ENCODE measurements at regions of chr1 and their contacts with region 1.

Region 1: GRCh38 chr1:66764994-66765578 is 12.8 kb downstream of the DYNLT5 start:
- DNase-seq: no peak

Region 2: DNA sequence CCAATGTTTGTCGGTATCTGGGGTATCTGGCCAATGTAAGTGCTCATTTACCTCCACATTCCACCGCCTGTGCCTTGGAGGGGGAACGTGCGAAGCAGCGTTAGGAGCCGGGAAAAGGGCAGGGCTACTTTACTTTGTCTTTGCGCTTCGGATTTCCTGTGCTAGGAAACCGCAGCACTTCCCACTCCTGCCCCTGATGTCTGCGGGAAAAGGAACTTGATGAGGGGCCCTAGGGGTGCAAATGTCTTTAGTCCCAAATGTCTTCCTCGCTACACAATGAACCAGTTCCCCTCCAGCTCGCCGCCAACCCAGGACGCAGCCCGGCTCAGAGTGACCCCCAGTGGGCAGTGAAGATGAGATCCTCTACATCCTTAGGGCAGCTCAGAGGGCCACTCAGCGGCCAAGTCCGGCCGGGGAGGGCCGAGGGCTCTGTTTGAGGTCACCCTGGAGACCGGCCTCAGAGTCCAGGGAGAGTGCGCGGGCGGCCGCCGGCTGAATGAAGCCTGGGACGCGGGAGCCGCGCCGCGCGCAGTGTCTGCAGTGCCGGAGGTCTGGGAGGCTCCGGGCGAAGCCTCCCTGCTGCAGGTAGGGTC is 13.0 kb before region 1 on chr1 and contains the start of gene DYNLT5:
- intact Hi-C with region 1: no loop called
- DNase-seq: peak; percentile 91
- total RNA-seq, gene DYNLT5: 1.9 to 3.0 TPM

Region 3: GRCh38 chr1:66876664-66877063 is 111.6 kb after region 1 on chr1:
- intact Hi-C with region 1: no loop called
- DNase-seq: no peak

Region 4: DNA sequence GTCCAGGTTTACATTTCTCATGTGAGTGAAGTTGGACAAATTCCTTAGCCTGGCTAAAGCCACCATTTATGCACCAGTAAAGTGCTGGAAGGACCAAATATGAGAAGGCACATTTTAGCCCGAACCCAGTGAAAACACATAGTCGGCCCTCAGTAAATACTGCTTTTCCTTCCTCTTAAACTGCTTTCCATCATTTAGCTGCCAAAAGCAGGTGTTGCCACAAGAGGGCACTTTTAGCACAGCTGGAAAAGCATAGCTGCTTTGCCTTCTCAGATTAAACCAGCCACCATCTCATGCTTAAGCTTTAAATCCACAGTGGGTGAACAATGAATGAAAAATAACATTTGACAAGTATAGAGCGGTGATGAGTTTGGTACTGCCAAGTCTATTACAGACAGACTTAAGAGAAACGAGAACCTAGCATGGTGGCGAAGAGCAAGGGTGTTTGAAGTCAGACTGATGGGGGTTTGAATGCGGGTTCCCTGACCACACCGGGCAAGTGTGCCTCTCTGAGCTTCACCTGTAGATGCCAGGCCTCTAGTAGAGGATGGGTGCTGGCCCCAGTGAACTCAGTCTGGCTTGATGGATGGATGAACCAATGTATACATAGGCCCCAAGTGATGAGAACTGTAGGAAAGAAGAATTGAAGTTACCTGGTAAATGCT is 231.1 kb after region 1 on chr1:
- intact Hi-C with region 1: loop called in 1 of 2 experiments (anchors 10 kb)
- DNase-seq: no peak

Region 5: GRCh38 chr1:67149179-67149770 is 384.2 kb after region 1 on chr1:
- intact Hi-C with region 1: loop called (anchors 10 kb)
- DNase-seq: no peak

Region 6: DNA sequence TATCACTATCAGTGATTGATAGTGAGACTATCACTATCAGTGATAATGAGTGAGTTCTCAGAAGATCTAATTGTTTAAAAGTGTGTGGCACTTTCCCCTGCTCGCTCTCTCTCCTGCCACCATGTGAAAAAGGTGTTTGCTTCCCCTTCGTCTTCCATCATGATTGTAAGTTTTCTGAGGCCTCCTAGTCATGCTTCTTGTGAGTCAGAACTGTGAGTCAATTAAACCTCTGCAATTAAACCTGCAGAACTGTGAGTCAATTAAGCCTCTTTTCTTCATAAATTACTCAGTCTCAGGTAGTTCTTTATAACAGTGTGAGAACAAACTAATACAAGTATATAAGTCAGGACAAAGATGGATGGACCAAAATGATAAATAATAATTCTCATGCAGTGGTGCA is 394.1 kb after region 1 on chr1:
- intact Hi-C with region 1: loop called in 1 of 2 experiments (anchors 10 kb)
- DNase-seq: no peak